ENCODE measurements at regions of chr1 and their contacts with region 1.

Region 1: DNA sequence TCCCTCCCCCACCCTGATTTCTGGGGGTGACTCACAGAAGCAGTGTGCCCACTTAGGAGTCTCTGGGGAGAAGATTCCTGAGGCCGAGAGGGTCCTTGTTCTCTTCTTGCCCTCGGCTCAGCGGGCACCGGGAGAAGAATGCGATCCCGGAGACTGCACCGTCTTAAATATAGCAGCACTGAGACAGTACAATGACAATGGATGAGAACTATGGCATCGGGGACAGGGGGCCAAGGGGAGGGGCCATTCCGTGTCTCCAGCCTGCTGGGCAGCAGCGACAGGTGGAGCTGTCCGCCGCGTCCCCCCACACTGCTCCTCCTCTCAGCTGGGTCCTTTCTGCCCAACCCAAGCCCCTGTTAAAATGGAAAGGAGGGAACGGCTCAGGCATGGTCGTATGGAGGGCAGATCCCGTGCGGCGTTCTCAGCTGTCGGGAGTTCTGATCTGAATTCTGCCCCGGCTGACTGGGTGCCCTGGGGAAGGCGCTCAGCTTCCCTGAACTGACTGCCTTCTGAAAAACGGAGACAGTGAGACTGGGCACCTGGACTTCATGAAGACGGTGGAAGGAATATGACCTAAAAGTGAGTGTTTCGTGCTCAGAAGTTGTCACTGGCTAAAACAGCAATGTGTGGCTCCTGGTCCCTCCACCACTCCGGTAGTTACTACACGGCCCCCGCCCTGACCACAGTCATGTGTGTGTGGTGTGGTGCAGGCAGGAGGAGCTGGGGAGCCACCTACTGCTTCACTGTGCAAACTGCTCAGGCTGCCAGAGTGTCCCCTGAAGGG is at the start of gene MYOM3:
- DNase-seq: peak; percentile 77
- H3K4me3 Mint-ChIP-seq: peak within 1 kb of the TSS; percentile 12
- H3K27ac Mint-ChIP-seq: no peak within 1 kb of the TSS
- H3K4me1 Mint-ChIP-seq: peaks cover 2% of the 10 kb centered on the region
- H3K27me3 Mint-ChIP-seq: peaks cover 19% of the 10 kb centered on the region
- total RNA-seq, gene MYOM3: not detected

Region 2: DNA sequence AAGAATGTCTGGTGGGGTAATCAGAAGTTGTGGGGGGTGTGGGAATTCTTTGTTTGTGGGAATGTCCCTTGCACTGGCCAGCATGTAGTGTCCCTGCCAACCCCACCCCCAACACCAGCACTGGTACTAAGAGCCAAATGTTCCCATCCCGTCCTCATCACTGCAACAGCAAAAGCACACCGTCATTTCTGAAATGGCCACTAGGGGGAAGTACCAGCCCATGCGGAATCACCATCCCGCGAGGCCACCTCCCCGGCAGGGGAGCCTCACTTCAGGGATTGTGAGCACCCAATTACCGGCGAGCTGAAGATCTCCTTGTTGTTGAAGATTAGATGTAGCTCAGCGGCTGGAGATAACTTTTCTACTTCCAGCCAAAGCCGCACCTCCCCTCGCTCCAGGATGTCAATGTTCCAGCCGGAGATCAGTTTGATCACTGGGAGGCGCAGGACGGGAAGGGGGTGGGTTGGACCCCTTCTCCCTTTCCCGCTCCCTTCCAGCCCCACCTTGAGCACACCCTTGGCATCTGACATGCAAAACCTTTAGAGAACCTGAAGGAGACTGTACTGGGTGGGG is 41.3 kb before region 1 on chr1:
- CTCF ChIA-PET with region 1: interaction called, 10 read pairs
- POLR2A ChIA-PET with region 1: no interaction called
- intact Hi-C with region 1: loop called (anchors 1 kb)
- DNase-seq: peak; percentile 83
- H3K4me3 Mint-ChIP-seq: no peak overlapping the region
- H3K27ac Mint-ChIP-seq: no peak overlapping the region
- H3K4me1 Mint-ChIP-seq: peaks cover 2% of the 10 kb centered on the region
- H3K27me3 Mint-ChIP-seq: peaks cover 10% of the 10 kb centered on the region

Measured in activated CD4-positive, alpha-beta memory T cell treated with anti-CD3 and anti-CD28 coated beads for 36 hours (primary cell).